Right ventricle myocardium inferior (tissue), 1 donor: ENCODE measurements at regions of chr6 and their contacts with region 1.

Region 1: DNA sequence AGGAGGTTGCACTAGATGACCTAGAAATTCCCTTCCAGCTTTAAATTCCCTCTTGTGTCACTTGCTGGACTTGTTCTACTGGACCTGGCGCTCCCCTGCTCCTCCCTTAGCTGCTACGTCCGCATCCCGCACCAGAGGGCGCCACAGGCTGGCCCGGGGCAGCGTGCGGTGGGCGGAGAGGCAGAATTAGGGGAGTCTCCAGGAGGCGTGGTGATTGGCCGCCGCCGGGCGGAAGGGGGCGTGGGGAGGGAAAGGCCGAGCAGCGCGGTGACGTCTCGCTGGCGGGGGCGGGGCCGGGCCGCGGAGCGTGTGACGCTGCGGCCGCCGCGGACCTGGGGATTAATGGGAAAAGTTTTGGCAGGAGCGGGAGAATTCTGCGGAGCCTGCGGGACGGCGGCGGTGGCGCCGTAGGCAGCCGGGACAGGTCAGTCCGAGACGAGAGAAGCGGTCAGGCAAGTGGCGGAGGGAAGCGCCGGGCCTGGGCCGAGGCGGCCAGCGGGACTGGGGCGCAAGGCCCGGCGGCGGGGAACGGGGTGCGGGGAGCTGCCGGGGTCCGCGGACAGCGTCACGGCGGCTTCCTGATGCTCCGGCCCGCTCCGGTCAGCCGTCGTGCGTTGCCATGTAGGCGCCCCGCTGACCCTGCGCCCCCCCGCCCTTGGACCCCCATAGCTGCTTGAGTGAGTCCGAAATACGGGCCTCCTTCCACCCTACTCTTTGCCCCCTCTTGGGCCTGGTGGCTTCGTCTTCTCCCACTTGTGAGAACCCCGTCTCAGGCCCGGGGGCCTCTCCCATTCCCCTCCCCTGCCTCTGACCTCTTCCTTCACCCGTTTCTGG is at the start of gene PPARD:
- DNase-seq: peak; percentile 99
- ATAC-seq: peak; percentile 99
- total RNA-seq, gene PPARD: 14.7 TPM

Region 2: GRCh38 chr6:35071347-35071994 is 271.0 kb before region 1 on chr6:
- intact Hi-C with region 1: no loop called
- DNase-seq: no peak
- ATAC-seq: no peak

Region 3: DNA sequence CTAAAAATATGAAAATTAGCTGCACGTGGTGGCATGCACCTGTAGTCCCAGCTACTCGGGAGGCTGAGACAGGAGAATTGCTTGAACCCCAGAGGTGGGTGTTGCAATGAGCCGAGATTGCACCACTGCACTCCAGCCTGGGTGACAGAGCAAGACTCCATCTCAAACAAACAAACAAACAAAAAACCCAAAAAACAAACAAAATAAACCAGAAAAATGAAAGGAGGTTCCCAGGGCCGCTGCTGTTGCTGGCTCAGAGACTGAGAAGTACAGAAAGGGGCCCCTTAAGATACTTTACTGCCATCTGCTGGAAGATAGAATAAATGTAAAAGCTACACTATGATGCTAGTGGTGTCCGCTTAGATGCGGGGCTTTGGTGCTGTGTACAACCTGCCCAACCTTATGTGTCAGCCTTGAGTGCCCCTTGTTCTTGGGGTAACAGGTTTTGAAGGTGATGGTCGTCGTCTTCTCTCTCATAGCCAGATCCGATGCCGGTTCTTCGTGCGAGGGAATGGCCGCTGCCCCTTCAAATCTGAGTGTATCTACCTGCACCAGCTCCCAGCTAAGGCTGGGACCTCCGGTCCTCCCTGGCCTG is 106.9 kb after region 1 on chr6:
- intact Hi-C with region 1: loop called (anchors 1 kb)
- DNase-seq: no peak
- ATAC-seq: peak; percentile 68

Region 4: GRCh38 chr6:35468181-35468979 is 125.9 kb after region 1 on chr6 and contains the start of gene RPL10A:
- intact Hi-C with region 1: loop called (anchors 1 kb)
- DNase-seq: peak; percentile 93
- ATAC-seq: peak; percentile 89
- total RNA-seq, gene RPL10A: 606 TPM